ENCODE measurements at regions of chr16 and their contacts with region 1.

Region 1: DNA sequence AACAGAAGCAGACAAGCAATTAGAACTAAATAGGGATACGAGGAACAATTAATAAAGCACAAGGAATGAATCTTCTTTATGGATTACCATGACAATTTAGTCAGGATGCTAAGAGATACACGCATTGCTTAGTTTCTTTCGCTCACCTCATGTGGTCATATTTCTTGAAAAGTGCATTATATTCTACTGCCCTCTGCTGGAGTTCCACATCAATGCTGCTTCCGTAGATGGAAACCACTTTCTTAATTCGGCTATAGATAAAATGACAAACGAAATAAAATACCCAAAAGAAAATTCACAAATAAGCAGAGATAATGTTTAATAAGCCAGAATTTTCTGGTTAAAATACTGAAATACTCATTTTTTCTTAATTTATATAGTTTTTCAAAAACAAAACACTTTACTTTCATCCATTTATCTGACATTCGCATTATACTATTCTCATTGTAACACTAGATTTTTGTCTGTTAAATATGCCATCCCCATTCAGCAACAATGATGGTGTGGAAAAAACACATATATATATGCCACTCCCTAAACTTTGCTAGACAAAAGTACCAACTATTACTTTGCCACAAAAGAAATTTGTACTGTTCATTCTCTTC is 22.0 kb upstream of the PHLPP2 start:
- DNase-seq: no peak
- H3K4me3 ChIP-seq: no peak overlapping the region
- H3K27ac ChIP-seq: no peak overlapping the region
- H3K4me1 ChIP-seq: no peaks in the 10 kb centered on the region
- H3K27me3 ChIP-seq: no peaks in the 10 kb centered on the region
- CTCF ChIP-seq: peak; percentile 56 to 77 (median 65)
- EP300 ChIP-seq: no peak
- POLR2A ChIP-seq: no peak

Region 2: GRCh38 chr16:71669932-71670536 is 76.5 kb before region 1 on chr16:
- intact Hi-C with region 1: loop called (anchors 10 kb)
- DNase-seq: no peak
- H3K4me3 ChIP-seq: no peak overlapping the region
- H3K27ac ChIP-seq: no peak overlapping the region
- H3K4me1 ChIP-seq: no peaks in the 10 kb centered on the region
- H3K27me3 ChIP-seq: no peaks in the 10 kb centered on the region
- CTCF ChIP-seq: no peak
- EP300 ChIP-seq: no peak
- POLR2A ChIP-seq: no peak